CD4-positive, alpha-beta memory T cell (primary cell): ENCODE measurements at regions of chr16 and their contacts with region 1.

Region 1: DNA sequence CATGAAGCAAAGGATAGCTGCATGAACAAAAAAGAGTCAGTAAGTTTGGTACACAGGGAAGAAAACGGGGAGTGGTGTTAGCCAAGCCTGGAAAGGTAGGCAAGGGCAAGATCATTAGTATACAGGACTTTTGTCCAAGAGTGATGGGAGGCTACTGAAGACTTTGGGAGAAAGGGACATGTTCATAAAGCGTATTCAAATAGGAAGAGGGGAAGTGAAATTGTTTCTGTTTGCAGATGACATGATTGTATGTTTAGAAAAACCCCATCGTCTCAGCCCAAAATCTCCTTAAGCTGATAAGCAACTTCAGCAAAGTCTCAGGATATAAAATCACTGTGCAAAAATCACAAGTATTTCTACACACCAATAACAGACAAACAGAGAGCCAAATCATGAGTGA is 19.4 kb downstream of the CDYL2 start:
- DNase-seq: no peak
- H3K4me3 ChIP-seq: no peak overlapping the region
- H3K4me3 Mint-ChIP-seq: no peak overlapping the region
- H3K27ac ChIP-seq: no peak overlapping the region
- H3K27ac Mint-ChIP-seq: no peak overlapping the region
- H3K4me1 ChIP-seq: no peaks in the 10 kb centered on the region
- H3K4me1 Mint-ChIP-seq: peaks cover 0 to 10% (median 6%) of the 10 kb centered on the region in 4 donors
- H3K27me3 ChIP-seq: no peaks in the 10 kb centered on the region
- H3K27me3 Mint-ChIP-seq: no peaks in the 10 kb centered on the region

Region 2: DNA sequence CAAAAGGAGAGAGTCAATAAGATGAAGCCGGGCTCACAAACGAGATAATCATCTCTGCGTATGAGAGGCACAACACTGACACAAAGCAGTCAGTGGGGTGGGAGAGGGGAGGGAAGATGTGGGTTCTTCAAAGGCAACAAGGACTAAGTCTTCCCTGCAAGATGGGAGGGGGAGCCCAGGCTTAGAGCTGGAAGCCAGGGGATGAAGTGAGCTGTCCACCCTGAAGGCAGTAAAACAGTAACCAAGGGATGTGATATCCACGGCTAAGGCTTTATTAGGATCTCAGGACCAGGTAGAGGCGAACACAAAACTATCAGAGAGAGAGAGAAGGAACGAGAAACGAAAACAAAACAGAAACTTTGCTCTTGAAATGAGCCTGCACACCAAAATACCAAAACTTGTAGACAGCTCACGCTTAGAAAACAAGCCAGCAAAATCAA is 128.2 kb before region 1 on chr16:
- CTCF ChIA-PET with region 1: no interaction called
- POLR2A ChIA-PET with region 1: no interaction called
- intact Hi-C with region 1: no loop called
- DNase-seq: peak; percentile 46 to 62 (median 51)
- H3K4me3 ChIP-seq: peak overlapping the region; percentile 33 to 72
- H3K4me3 Mint-ChIP-seq: peak overlapping the region; percentile 82 to 97 (median 90)
- H3K27ac ChIP-seq: peak overlapping the region; percentile 52
- H3K27ac Mint-ChIP-seq: peak overlapping the region; percentile 69 to 97 (median 92)
- H3K4me1 ChIP-seq: peaks cover 20% of the 10 kb centered on the region
- H3K4me1 Mint-ChIP-seq: peaks cover 19 to 33% (median 26%) of the 10 kb centered on the region in 4 donors
- H3K27me3 ChIP-seq: no peaks in the 10 kb centered on the region
- H3K27me3 Mint-ChIP-seq: no peaks in the 10 kb centered on the region

Region 3: GRCh38 chr16:80739523-80739922 is 45.4 kb before region 1 on chr16:
- CTCF ChIA-PET with region 1: no interaction called
- POLR2A ChIA-PET with region 1: no interaction called
- intact Hi-C with region 1: no loop called
- DNase-seq: no peak
- H3K4me3 ChIP-seq: no peak overlapping the region
- H3K4me3 Mint-ChIP-seq: no peak overlapping the region
- H3K27ac ChIP-seq: no peak overlapping the region
- H3K27ac Mint-ChIP-seq: no peak overlapping the region
- H3K4me1 ChIP-seq: peaks cover 1% of the 10 kb centered on the region
- H3K4me1 Mint-ChIP-seq: peaks cover 4 to 10% (median 7%) of the 10 kb centered on the region in 4 donors
- H3K27me3 ChIP-seq: no peaks in the 10 kb centered on the region
- H3K27me3 Mint-ChIP-seq: no peaks in the 10 kb centered on the region

Region 4: DNA sequence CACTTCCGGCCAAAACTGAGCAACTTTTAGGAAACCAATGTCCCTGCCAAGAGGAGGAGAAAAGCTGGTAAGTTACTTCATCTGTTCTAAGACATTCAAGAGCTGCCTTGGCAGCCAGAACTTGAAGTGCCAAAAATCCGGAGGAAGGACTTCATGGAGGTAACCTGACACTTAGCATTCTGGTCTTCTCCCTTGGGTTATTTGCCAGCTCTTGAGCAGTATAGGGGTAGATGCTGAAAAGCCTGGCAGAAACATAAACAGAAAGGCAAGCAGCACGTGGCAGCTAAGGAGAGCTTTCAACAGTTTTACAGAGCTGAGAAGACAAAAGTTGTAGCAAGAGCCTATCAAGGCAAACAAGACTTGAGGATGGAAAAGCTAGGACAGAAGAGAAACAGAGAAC is 33.8 kb before region 1 on chr16:
- CTCF ChIA-PET with region 1: no interaction called
- POLR2A ChIA-PET with region 1: no interaction called
- intact Hi-C with region 1: loop called (anchors 1 kb)
- DNase-seq: no peak
- H3K4me3 ChIP-seq: no peak overlapping the region
- H3K4me3 Mint-ChIP-seq: no peak overlapping the region
- H3K27ac ChIP-seq: no peak overlapping the region
- H3K27ac Mint-ChIP-seq: peak overlapping the region in 2 of 7 donors; percentile 5 to 68
- H3K4me1 ChIP-seq: peaks cover 7% of the 10 kb centered on the region
- H3K4me1 Mint-ChIP-seq: peaks cover 11 to 41% (median 23%) of the 10 kb centered on the region in 4 donors
- H3K27me3 ChIP-seq: no peaks in the 10 kb centered on the region
- H3K27me3 Mint-ChIP-seq: no peaks in the 10 kb centered on the region